ENCODE measurements at regions of chr9 and their contacts with region 1.

Region 1: GRCh38 chr9:131393622-131394463 is at the start of gene PRRC2B:
- DNase-seq: peak; percentile 82 to 87
- H3K4me3 ChIP-seq: peak within 1 kb of the TSS; percentile 46 to 98
- H3K27ac ChIP-seq: peak within 1 kb of the TSS; percentile 97 to 99
- H3K4me1 ChIP-seq: peaks cover 11 to 15% of the 10 kb centered on the region in 2 donors
- H3K27me3 ChIP-seq: no peaks in the 10 kb centered on the region
- CTCF ChIP-seq: peak; percentile 23 to 96 (median 66)
- POLR2A ChIP-seq: peak; percentile 41 to 75
- total RNA-seq, gene PRRC2B: 81.5 to 297 (median 133) TPM

Region 2: DNA sequence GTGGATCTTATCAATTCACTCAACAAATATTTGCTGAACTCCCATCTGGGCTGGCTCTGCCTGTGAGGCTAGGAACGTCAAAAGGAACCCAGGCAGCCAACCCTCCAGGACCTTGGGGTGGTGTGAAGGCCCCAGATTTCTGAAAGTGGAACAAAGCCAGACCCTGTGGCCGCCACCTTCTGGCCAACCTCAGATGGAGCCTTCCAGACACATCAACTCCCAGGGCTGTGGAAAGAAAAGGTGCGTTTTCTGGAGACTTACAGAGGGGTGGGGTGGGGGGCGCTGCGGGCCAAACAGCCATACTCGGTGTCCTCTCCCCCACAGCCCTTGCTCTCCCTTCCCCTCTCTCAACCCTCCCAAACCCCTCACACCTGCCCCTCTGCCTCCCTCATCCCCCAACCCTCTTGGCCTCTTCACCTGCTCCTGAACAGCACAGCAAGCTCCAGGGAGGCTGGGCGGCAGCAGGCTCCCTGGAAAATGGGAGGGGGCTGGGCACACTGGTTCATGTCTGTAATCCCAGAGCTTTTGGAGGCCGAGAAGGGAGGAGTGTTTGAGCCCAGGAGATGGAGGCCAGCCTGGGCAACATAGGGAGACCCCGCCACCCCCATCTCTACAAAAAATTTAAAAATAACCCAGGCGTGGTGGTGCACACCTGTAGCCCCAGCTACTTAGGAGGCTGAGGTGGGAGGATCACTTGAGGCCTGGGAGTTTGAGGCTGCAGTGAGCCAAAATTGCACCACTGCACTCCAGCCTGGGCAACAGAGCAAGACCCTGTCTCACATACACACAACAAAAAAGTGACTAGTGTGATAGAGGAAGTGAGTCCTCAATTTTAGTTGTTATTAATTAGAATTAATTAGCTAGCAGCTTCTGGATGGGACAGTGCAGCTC is 45.0 kb before region 1 on chr9:
- intact Hi-C with region 1: no loop called
- DNase-seq: no peak
- H3K4me3 ChIP-seq: no peak overlapping the region
- H3K27ac ChIP-seq: no peak overlapping the region
- H3K4me1 ChIP-seq: no peaks in the 10 kb centered on the region
- H3K27me3 ChIP-seq: no peaks in the 10 kb centered on the region
- CTCF ChIP-seq: no peak
- POLR2A ChIP-seq: no peak

Region 3: GRCh38 chr9:131423171-131423581 is 29.3 kb after region 1 on chr9:
- intact Hi-C with region 1: loop called (anchors 2 kb)
- DNase-seq: peak; percentile 52 to 61
- H3K4me3 ChIP-seq: peak overlapping the region in 1 of 2 donors; percentile 4
- H3K27ac ChIP-seq: peak overlapping the region; percentile 54 to 72
- H3K4me1 ChIP-seq: peaks cover 15 to 23% of the 10 kb centered on the region in 2 donors
- H3K27me3 ChIP-seq: no peaks in the 10 kb centered on the region
- CTCF ChIP-seq: no peak
- POLR2A ChIP-seq: no peak

Region 4: GRCh38 chr9:131464354-131465000 is 70.6 kb after region 1 on chr9:
- intact Hi-C with region 1: no loop called
- DNase-seq: no peak
- H3K4me3 ChIP-seq: no peak overlapping the region
- H3K27ac ChIP-seq: no peak overlapping the region
- H3K4me1 ChIP-seq: no peaks in the 10 kb centered on the region
- H3K27me3 ChIP-seq: no peaks in the 10 kb centered on the region
- CTCF ChIP-seq: no peak
- POLR2A ChIP-seq: no peak

Region 5: GRCh38 chr9:131567910-131568309 is 174.1 kb after region 1 on chr9:
- intact Hi-C with region 1: no loop called
- DNase-seq: no peak
- H3K4me3 ChIP-seq: no peak overlapping the region
- H3K27ac ChIP-seq: no peak overlapping the region
- H3K4me1 ChIP-seq: no peaks in the 10 kb centered on the region
- H3K27me3 ChIP-seq: no peaks in the 10 kb centered on the region
- CTCF ChIP-seq: no peak
- POLR2A ChIP-seq: no peak

Region 6: DNA sequence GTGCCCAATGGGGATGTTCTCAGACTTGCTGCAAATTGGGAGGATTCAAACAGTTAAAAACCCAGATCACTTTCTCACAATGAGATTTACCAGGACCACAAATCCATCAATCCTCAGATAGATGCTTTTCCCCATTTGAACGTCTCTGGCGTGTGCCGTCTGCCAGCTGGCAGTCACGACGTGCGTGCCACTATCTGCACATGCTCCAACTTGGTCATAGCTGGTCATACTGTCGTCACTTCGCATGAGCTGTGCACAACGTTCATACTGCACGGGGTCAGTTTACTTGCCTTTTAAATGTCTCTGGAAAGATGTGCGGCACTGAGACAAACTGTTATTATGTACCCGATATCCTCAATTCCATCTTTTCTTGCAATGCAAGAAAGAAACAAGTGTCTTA is 464.3 kb after region 1 on chr9:
- intact Hi-C with region 1: no loop called
- DNase-seq: no peak
- H3K4me3 ChIP-seq: no peak overlapping the region
- H3K27ac ChIP-seq: no peak overlapping the region
- H3K4me1 ChIP-seq: no peaks in the 10 kb centered on the region
- H3K27me3 ChIP-seq: no peaks in the 10 kb centered on the region
- CTCF ChIP-seq: no peak
- POLR2A ChIP-seq: no peak

Measured in uterus (tissue), 4 donors.